Endothelial cell of umbilical vein (primary cell): ENCODE measurements at regions of chr5 and their contacts with region 1.

Region 1: DNA sequence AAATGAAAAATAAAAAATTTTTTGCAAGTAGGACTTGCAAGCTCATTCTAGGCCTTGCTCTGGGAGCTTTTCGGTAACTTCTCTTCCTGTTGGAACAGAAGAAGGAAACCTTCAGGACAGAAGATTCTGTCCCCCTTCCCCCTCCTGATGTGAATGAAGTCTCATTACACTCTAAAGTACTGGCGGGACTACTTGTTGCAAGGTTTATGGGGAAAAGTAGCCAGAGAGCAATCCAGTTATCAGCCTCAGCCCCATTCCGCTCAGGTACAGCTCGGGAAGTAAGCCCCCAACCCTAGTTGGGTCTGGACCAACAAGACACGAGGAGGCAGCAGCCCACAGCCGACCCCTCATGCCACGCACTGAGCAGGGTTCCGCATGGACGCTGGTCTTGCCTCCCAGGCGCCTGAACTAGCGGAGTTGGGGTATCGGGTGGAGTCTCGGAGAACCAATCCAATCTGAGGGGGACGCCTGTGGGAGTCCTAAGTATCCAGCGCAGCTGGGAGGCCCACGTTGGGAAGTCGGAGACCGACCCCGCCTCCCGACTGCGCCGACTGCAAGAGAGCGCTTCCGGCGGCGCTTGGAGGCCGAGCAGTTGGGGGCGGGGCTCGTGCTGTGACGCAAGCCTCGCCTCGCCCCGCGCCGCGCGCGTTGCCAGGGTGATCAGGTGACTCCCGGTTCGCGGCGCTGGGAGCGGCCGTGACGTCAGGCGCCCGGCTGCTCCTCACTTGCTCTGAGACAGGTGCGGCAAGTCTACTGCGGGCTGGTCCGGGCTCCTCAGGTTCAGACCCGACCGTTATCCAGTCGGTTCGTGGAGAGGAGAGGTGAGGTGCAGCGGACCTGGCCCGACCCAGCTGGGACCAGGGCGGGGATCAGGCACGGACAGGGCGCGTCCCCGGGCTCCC is at the start of gene CYSTM1:
- DNase-seq: peak; percentile 93
- H3K4me3 ChIP-seq: peak within 1 kb of the TSS; percentile 49 to 100 (median 56)
- H3K27ac ChIP-seq: peak within 1 kb of the TSS; percentile 75
- H3K4me1 ChIP-seq: peaks cover 11% of the 10 kb centered on the region
- H3K27me3 ChIP-seq: peaks cover 0 to 1% of the 10 kb centered on the region in 2 experiments
- CTCF ChIP-seq: no peak
- POLR2A ChIP-seq: peak; percentile 69
- total RNA-seq, gene CYSTM1: 28.9 and 36.0 TPM in 2 replicates

Region 2: GRCh38 chr5:140357726-140358093 is 183.0 kb after region 1 on chr5:
- CTCF ChIA-PET with region 1: interaction called, 7 read pairs
- POLR2A ChIA-PET with region 1: no interaction called
- dilution Hi-C with region 1: no loop called
- intact Hi-C with region 1: loop called (anchors 5 kb)
- DNase-seq: peak; percentile 88
- H3K4me3 ChIP-seq: no peak overlapping the region
- H3K27ac ChIP-seq: no peak overlapping the region
- H3K4me1 ChIP-seq: no peaks in the 10 kb centered on the region
- H3K27me3 ChIP-seq: no peaks in the 10 kb centered on the region
- CTCF ChIP-seq: peak; percentile 94 to 97
- POLR2A ChIP-seq: no peak

Region 3: DNA sequence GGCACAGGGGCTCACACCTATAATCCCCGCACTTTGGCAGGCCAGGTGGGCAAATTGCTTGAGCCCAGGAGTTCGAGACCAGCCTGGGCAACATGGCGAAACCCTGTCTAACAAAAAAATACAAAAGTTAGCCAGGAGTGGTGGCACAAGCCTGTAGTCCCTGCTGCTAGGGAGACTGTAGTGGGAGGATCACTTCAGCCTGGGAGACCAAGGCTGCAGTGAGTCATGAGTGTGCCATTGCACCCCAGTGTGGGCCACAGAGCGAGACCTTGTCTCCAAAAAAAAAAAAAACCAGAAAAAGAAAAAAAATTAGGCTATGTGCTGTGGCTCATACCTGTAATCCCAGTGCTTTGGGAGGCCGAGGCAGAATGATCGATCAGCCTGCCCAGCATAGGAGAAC is 314.2 kb after region 1 on chr5:
- CTCF ChIA-PET with region 1: no interaction called
- POLR2A ChIA-PET with region 1: no interaction called
- dilution Hi-C with region 1: no loop called
- intact Hi-C with region 1: no loop called
- DNase-seq: no peak
- H3K4me3 ChIP-seq: no peak overlapping the region
- H3K27ac ChIP-seq: no peak overlapping the region
- H3K4me1 ChIP-seq: no peaks in the 10 kb centered on the region
- H3K27me3 ChIP-seq: no peaks in the 10 kb centered on the region
- CTCF ChIP-seq: no peak
- POLR2A ChIP-seq: no peak

Region 4: DNA sequence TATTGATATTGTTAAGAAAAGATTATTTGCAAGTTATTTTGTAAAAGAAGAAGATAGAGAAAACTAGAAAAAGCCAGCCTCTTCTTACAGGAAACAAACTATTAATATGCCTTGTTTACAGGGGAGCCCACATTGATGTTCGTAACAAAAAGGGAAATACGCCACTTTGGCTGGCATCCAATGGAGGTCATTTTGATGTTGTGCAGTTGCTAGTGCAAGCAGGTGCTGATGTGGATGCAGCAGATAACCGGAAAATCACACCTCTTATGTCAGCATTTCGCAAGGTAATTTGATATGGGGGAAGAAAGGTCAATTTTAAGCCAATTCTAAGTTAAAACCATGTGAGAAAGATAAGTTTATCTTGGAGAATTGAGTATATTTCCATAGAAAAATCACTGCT is 335.2 kb after region 1 on chr5:
- CTCF ChIA-PET with region 1: no interaction called
- POLR2A ChIA-PET with region 1: no interaction called
- dilution Hi-C with region 1: no loop called
- intact Hi-C with region 1: no loop called
- DNase-seq: no peak
- H3K4me3 ChIP-seq: no peak overlapping the region
- H3K27ac ChIP-seq: no peak overlapping the region
- H3K4me1 ChIP-seq: no peaks in the 10 kb centered on the region
- H3K27me3 ChIP-seq: no peaks in the 10 kb centered on the region
- CTCF ChIP-seq: no peak
- POLR2A ChIP-seq: no peak